ENCODE measurements at regions of chr7 and their contacts with region 1.

Region 1: GRCh38 chr7:129163875-129164544 is 19.5 kb downstream of the TSPAN33 start:
- DNase-seq: no peak
- ATAC-seq: no peak
- H3K4me3 ChIP-seq: no peak overlapping the region
- H3K27ac ChIP-seq: no peak overlapping the region
- H3K4me1 ChIP-seq: no peaks in the 10 kb centered on the region
- H3K27me3 ChIP-seq: no peaks in the 10 kb centered on the region
- CTCF ChIP-seq: peak; percentile 54 to 85 (median 65)
- POLR2A ChIP-seq: no peak

Region 2: DNA sequence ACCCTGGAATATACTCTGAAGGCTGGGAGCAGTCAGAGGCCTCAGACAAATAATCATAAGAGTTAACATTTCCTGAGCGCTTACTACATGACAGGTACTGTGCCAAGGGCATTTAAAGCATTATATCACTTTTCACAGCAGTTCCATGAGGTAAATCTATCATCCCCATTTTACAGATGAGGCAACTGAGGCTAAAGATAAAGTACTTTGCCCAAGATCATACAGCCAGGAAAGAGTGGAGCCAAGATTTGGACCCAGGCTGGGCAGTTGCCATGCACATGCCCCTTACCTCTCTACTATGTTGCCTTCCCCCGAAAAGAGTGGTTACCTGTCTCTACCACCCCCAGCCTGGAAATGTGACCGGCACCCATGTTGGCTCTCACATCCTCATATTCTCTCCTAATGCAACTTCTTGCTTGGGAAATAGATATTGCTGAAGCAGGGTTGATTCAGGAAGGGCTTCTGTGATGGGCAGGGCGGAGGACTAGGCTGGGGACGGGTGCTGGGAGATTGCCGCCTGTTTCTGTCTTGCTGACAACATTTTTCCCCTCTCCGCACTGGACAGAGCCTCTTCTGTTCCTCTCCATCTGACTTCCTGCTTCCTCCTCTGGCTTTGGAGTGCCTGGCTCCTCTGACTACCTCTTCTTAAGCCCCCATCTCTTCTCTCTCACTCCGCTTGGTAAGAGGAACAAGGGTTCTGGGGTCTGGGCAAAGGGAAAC is 38.2 kb after region 1 on chr7:
- in situ Hi-C with region 1: loop called in 1 of 4 experiments (anchors 5 kb)
- intact Hi-C with region 1: no loop called
- DNase-seq: no peak
- ATAC-seq: no peak
- H3K4me3 ChIP-seq: no peak overlapping the region
- H3K27ac ChIP-seq: no peak overlapping the region
- H3K4me1 ChIP-seq: no peaks in the 10 kb centered on the region
- H3K27me3 ChIP-seq: no peaks in the 10 kb centered on the region
- CTCF ChIP-seq: no peak
- POLR2A ChIP-seq: no peak

Region 3: GRCh38 chr7:129210256-129210988 is 46.4 kb after region 1 on chr7:
- in situ Hi-C with region 1: no loop called
- intact Hi-C with region 1: loop called (anchors 1 kb)
- DNase-seq: peak; percentile 48 to 73
- ATAC-seq: peak; percentile 79 to 84
- H3K4me3 ChIP-seq: no peak overlapping the region
- H3K27ac ChIP-seq: no peak overlapping the region
- H3K4me1 ChIP-seq: peaks cover 0 to 3% of the 10 kb centered on the region in 2 donors
- H3K27me3 ChIP-seq: no peaks in the 10 kb centered on the region
- CTCF ChIP-seq: peak; percentile 66 to 85 (median 78)
- POLR2A ChIP-seq: no peak

Measured in gastrocnemius medialis (tissue), 4 donors.